ENCODE measurements at regions of chr15 and their contacts with region 1.

Region 1: DNA sequence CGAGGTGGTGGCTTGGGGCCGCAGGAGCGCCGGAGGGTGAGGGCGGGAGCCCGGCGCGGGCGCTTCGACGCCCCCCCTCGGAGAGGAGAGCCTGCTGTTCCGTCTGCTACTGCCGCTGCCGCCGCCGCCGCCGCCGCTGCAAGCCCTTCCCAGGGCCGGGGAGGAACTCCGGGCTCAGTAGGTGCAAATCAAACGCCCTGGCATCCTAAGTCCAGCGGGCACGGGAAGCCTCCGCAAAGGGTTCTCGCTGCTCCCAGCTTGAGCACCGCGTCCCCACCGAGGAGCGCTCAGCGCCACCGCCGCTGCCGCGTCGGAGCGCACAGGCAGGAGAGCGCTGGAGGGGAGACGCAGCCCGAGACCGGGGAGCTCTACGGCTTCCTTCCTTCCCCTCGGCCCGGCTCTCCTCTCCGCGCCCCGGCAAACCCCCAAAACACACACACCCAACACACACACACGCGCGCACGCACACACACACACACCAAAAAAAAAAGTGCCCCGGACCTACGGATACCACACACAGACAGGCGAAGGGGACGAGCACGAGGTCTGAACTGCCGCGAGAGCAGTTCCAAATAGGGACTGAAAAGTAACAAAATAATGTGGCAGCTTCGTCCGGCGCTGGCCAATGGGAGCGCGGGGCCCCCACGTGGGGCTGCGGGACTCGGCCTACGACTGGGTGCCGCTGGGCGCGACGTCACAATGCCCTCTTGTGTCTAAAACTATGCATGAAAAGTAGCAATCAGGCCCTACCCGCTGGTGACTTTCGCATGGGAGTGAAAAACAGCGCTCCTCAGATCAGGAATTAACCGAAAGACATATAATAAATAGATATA is at the start of gene TLE3:
- DNase-seq: peak; percentile 91 to 98 (median 97)
- ATAC-seq: peak; percentile 68
- H3K4me3 ChIP-seq: peak within 1 kb of the TSS; percentile 75
- H3K27ac ChIP-seq: peak within 1 kb of the TSS; percentile 97
- H3K4me1 ChIP-seq: peaks cover 64 to 66% of the 10 kb centered on the region in 2 experiments
- H3K27me3 ChIP-seq: no peaks in the 10 kb centered on the region
- CTCF ChIP-seq: peak; percentile 51 to 72 (median 58)
- EP300 ChIP-seq: no peak
- POLR2A ChIP-seq: peak; percentile 98
- RAD21 ChIP-seq: peak; percentile 38 to 67; a peak in 3 of 4 replicates
- polyA plus RNA-seq, gene TLE3: 1.5 to 2.3 TPM

Region 2: DNA sequence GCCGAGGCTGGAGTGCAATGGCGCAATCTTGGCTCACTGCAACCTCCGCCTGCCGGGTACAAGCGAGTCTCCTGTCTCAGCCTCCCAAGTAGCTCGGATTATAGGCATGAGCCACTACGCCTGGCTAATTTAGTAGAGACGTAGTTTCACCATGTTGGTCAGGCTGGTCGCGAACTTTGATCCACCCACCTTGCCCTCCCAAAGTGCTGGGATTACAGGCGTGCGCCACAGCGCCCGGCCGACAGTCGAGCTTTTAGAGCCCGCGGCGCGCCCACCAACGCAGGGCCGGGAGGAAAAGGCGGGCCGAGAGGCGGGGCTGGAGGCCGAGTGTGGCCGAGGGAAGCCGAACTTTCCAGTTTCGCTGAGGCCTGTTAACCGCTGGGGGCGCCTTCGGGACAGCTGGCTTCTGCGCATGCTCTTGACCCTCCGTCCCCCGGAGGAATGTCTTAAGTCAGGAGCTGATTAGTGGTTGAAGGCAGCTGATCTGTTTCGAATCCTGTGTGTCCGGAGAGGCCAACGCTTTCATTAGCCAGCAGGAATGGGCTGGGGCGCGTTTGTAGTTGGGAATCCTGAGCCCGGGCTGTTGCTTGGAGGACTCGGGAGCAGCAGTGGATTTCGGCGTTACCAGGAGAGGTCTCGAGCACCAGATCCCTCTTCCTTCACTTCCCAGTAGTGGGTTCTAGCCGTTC is 634.9 kb before region 1 on chr15:
- CTCF ChIA-PET with region 1: no interaction called
- POLR2A ChIA-PET with region 1: no interaction called
- in situ Hi-C with region 1: no loop called
- intact Hi-C with region 1: loop called (anchors 2 kb)
- DNase-seq: peak; percentile 96 to 98 (median 97)
- ATAC-seq: peak; percentile 96
- H3K4me3 ChIP-seq: peak overlapping the region; percentile 45
- H3K27ac ChIP-seq: peak overlapping the region; percentile 92
- H3K4me1 ChIP-seq: peaks cover 12 to 27% of the 10 kb centered on the region in 2 experiments; a peak in 4 of 5 replicates
- H3K27me3 ChIP-seq: no peaks in the 10 kb centered on the region
- CTCF ChIP-seq: peak; percentile 80 to 96 (median 95); a peak in 5 of 6 replicates
- EP300 ChIP-seq: peak; percentile 35; the same call in 1 of the 2 replicates
- POLR2A ChIP-seq: peak; percentile 93
- RAD21 ChIP-seq: no peak

Region 3: DNA sequence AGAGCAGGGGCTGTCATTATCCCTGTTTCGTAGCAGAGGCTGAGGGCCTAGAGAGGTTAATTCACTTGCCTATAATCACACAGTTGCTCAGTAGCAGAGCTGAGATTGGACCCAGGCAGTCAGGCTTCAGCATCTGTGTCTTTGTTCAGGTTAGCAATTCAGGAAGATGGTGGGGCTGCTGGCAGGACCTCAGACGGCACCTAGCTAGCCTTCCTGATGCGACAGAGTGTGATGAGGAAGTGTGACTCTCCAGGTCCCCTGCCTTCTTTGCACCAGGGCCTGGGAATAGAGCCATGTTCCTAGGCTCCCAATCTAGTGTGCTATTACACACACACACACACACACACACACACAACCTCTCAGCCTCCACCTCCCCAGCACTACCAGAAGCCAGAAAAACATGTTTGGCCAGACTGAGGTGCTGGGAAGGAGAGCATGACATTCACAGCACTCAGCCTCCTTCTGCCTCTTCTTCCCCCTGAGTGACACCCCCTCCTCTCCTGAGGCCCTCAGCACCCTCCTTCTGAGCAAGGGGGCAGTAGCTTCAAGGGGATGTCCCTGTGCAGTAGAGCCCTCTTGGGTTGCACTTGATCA is 88.8 kb before region 1 on chr15:
- CTCF ChIA-PET with region 1: no interaction called
- POLR2A ChIA-PET with region 1: no interaction called
- in situ Hi-C with region 1: no loop called
- intact Hi-C with region 1: no loop called
- DNase-seq: no peak
- ATAC-seq: no peak
- H3K4me3 ChIP-seq: no peak overlapping the region
- H3K27ac ChIP-seq: no peak overlapping the region
- H3K4me1 ChIP-seq: no peaks in the 10 kb centered on the region
- H3K27me3 ChIP-seq: peaks cover 15 to 45% of the 10 kb centered on the region in 2 experiments; a peak in 4 of 5 replicates
- CTCF ChIP-seq: no peak
- EP300 ChIP-seq: no peak
- POLR2A ChIP-seq: no peak
- RAD21 ChIP-seq: no peak

Region 4: DNA sequence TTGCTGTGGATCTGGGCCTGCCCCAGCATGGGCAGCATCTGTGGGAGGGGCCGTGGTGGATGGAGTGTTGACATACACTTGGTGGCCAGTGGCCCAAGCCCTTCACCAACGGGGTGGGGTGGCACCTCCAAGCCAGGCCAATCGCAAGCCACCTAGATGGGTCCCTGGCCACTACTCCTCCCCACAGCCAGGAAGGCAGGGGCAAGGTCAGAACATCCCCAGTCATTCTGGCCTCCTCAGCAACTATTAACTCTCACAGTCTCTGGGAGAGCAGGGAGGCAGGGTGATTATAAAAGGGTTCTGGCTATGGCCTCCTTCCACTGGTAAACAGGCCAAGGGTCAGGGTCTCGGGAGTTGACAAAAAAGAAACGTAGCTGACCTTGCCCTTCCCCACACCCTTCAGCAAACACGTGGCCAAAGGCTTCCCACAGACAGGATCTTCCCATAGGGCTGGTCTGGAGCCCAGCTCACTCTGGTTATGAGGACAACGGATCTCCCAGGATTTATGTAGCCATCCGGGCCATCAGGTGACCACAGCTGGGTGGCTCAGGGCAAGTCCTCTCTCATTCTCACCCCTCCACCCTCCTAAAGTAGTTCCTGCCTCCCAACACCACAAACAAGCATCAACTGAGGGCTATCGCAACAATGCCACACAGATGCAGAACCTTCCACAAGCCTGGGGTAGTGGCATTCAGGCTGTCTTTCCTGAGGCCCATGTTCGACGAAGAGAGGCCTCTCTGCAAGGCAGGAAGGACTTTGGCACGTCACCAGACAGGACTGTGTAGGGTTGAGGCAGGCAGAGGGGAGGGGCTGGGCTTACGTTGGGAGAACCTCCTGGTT is 18.8 kb before region 1 on chr15:
- CTCF ChIA-PET with region 1: no interaction called
- POLR2A ChIA-PET with region 1: interaction called, 11 read pairs
- in situ Hi-C with region 1: no loop called
- intact Hi-C with region 1: no loop called
- DNase-seq: peak in 1 of 4 experiments; percentile 38
- ATAC-seq: peak; percentile 13
- H3K4me3 ChIP-seq: no peak overlapping the region
- H3K27ac ChIP-seq: no peak overlapping the region
- H3K4me1 ChIP-seq: peaks cover 4 to 5% of the 10 kb centered on the region in 2 experiments; a peak in 3 of 5 replicates
- H3K27me3 ChIP-seq: no peaks in the 10 kb centered on the region
- CTCF ChIP-seq: no peak
- EP300 ChIP-seq: no peak
- POLR2A ChIP-seq: no peak
- RAD21 ChIP-seq: no peak

Region 5: GRCh38 chr15:70086636-70087035 is 10.9 kb before region 1 on chr15:
- CTCF ChIA-PET with region 1: no interaction called
- POLR2A ChIA-PET with region 1: interaction called, 20 read pairs
- in situ Hi-C with region 1: no loop called
- intact Hi-C with region 1: no loop called
- DNase-seq: peak in 3 of 4 experiments; percentile 16 to 47 (median 47)
- ATAC-seq: peak; percentile 61; the same call in 2 of the 3 replicates
- H3K4me3 ChIP-seq: no peak overlapping the region
- H3K27ac ChIP-seq: no peak overlapping the region
- H3K4me1 ChIP-seq: peaks cover 30 to 52% of the 10 kb centered on the region in 2 experiments
- H3K27me3 ChIP-seq: no peaks in the 10 kb centered on the region
- CTCF ChIP-seq: no peak
- EP300 ChIP-seq: 0 out of 2 replicates have a peak, but pooled peaks have one; percentile 30
- POLR2A ChIP-seq: no peak
- RAD21 ChIP-seq: no peak

Region 6: DNA sequence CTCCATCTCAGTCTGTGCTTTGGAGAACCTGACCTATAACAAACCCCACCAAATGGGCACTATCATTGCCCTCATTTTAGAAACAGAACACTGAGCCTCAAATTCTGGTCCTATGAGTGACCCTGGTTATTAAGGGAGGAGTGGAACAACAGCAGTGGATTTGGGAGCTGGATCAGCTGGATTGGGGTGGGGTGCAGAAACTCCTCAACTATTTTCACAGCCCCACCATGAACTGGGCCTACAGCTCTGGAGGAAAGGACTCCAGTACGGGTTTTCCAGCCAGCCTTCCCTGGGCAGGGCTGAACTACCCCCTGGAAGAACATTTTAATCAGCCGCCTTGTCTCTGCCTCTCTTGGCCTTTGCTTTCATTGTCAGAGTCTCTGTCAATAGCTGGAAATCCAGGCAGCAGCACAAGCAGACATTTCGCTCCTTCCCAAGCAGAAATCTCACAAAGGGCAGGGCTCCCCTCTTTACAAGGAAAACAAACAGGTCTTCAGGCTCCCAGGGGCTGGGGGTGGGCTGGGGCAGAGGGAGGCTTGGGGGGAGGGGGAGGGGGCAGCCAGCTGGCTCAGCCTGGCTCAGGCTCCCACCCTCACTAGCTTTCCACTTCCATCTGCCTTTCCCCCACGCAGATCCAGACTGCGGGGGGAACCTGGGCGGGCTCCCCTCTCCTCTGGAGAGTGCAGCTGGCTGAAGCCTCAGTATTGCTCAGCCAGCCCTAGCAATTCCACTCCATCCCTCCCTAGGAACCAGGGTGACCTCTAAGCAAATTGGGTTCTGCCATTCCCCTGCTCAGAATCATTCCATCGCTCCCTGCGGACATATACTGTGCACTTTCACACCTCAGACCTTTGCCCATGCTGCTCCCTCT is 13.9 kb after region 1 on chr15:
- CTCF ChIA-PET with region 1: no interaction called
- POLR2A ChIA-PET with region 1: interaction called, 30 read pairs
- in situ Hi-C with region 1: no loop called
- intact Hi-C with region 1: loop called (anchors 1 kb)
- DNase-seq: peak; percentile 81 to 84 (median 83)
- ATAC-seq: peak; percentile 96
- H3K4me3 ChIP-seq: no peak overlapping the region; the same call in 1 of the 2 replicates
- H3K27ac ChIP-seq: peak overlapping the region; percentile 55; the same call in 1 of the 3 replicates
- H3K4me1 ChIP-seq: peaks cover 9 to 11% of the 10 kb centered on the region in 2 experiments
- H3K27me3 ChIP-seq: peaks cover 2 to 5% of the 10 kb centered on the region in 2 experiments; a peak in 3 of 5 replicates
- CTCF ChIP-seq: no peak
- EP300 ChIP-seq: 0 out of 2 replicates have a peak, but pooled peaks have one; percentile 41
- POLR2A ChIP-seq: no peak
- RAD21 ChIP-seq: no peak

Region 7: GRCh38 chr15:70170901-70171886 is 73.6 kb after region 1 on chr15:
- CTCF ChIA-PET with region 1: no interaction called
- POLR2A ChIA-PET with region 1: no interaction called
- in situ Hi-C with region 1: no loop called
- intact Hi-C with region 1: no loop called
- DNase-seq: peak in 3 of 4 experiments; percentile 36 to 55 (median 51)
- ATAC-seq: peak; percentile 47; the same call in 2 of the 3 replicates
- H3K4me3 ChIP-seq: no peak overlapping the region
- H3K27ac ChIP-seq: no peak overlapping the region
- H3K4me1 ChIP-seq: peaks cover 0 to 5% of the 10 kb centered on the region in 2 experiments; a peak in 4 of 5 replicates
- H3K27me3 ChIP-seq: peaks cover 6 to 41% of the 10 kb centered on the region in 2 experiments; a peak in 3 of 5 replicates
- CTCF ChIP-seq: no peak
- EP300 ChIP-seq: 0 out of 2 replicates have a peak, but pooled peaks have one; percentile 9
- POLR2A ChIP-seq: no peak
- RAD21 ChIP-seq: no peak

Region 8: GRCh38 chr15:70299931-70300869 is 202.6 kb after region 1 on chr15:
- CTCF ChIA-PET with region 1: no interaction called
- POLR2A ChIA-PET with region 1: no interaction called
- in situ Hi-C with region 1: no loop called
- intact Hi-C with region 1: no loop called
- DNase-seq: no peak
- ATAC-seq: no peak
- H3K4me3 ChIP-seq: no peak overlapping the region
- H3K27ac ChIP-seq: no peak overlapping the region
- H3K4me1 ChIP-seq: no peaks in the 10 kb centered on the region
- H3K27me3 ChIP-seq: peaks cover 0 to 3% of the 10 kb centered on the region in 2 experiments; a peak in 1 of 5 replicates
- CTCF ChIP-seq: no peak
- EP300 ChIP-seq: no peak
- POLR2A ChIP-seq: no peak
- RAD21 ChIP-seq: no peak

Region 9: GRCh38 chr15:70447928-70448698 is 350.6 kb after region 1 on chr15:
- CTCF ChIA-PET with region 1: no interaction called
- POLR2A ChIA-PET with region 1: interaction called, 3 read pairs
- in situ Hi-C with region 1: no loop called
- intact Hi-C with region 1: loop called (anchors 2 kb)
- DNase-seq: peak; percentile 80 to 98 (median 84)
- ATAC-seq: peak; percentile 95
- H3K4me3 ChIP-seq: no peak overlapping the region; the same call in 1 of the 2 replicates
- H3K27ac ChIP-seq: peak overlapping the region; percentile 52
- H3K4me1 ChIP-seq: peaks cover 31 to 39% of the 10 kb centered on the region in 2 experiments
- H3K27me3 ChIP-seq: no peaks in the 10 kb centered on the region
- CTCF ChIP-seq: 0 out of 6 replicates have a peak, but pooled peaks of 1 of the 3 experiments have one; percentile 5
- EP300 ChIP-seq: peak; percentile 93
- POLR2A ChIP-seq: no peak
- RAD21 ChIP-seq: peak; percentile 18 to 35